Mammary epithelial cell (primary cell): ENCODE measurements at regions of chr1 and their contacts with region 1.

Region 1: DNA sequence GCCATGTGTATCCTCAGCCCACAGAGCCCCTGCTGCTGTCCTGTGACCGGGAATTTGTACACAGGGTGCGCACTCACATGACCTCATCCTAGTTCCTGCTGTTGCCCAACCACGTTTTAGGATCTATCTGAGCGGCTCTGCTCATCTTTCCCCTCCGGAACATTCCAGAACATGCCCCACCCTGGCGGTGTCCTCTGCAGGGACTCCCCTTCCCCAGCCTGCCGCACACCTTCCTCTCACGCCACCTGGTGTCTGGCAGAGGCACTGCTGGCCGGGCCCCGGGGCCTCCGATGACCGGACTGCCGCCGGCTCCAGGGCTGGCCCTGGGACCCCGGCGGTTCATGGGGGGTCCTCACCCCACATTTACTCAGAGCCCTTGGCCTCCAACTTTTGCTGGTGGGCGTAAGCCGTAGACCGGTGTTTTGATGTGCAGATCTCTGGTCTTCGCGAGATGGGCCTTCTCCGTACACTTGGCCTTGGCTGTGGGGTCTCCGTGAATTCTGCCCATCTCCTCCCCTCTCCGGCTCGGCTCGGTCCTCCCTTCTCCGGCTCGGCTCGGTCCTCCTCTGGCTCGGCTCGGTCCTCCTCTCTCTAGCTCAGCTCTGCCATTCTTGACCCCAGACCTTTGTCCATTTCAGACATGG is 29.5 kb downstream of the ARHGEF16 start:
- DNase-seq: no peak
- H3K4me3 ChIP-seq: no peak overlapping the region
- H3K27ac ChIP-seq: no peak overlapping the region
- H3K4me1 ChIP-seq: peaks cover 16% of the 10 kb centered on the region
- H3K27me3 ChIP-seq: no peaks in the 10 kb centered on the region
- CTCF ChIP-seq: peak; percentile 82 to 97

Region 2: DNA sequence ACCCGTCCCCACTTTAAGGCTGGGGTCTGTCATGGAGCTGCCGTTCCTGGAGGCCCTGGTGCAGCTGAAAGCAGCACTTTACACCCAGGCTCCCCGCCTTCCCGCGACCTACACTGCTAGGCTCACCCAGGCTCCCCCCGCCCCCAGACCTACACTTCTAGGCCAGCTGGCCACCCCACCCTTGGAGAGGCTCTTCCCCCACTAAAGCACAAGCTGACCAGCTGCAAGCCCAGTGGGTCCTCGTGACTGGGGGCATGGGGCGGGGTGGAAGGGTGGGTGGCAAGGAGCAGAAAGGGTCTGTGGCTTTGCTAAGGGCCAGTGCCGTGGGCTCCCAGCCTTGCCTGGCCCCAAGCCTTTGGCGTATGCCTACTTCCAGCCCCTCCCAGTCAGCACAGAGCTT is 39.2 kb before region 1 on chr1:
- CTCF ChIA-PET with region 1: no interaction called
- dilution Hi-C with region 1: no loop called
- in situ Hi-C with region 1: loop called (anchors 5 kb)
- intact Hi-C with region 1: no loop called
- DNase-seq: no peak
- H3K4me3 ChIP-seq: no peak overlapping the region
- H3K27ac ChIP-seq: no peak overlapping the region
- H3K4me1 ChIP-seq: no peaks in the 10 kb centered on the region
- H3K27me3 ChIP-seq: no peaks in the 10 kb centered on the region
- CTCF ChIP-seq: no peak

Region 3: GRCh38 chr1:3624200-3625136 is 140.5 kb after region 1 on chr1 and contains the start of gene TPRG1L:
- CTCF ChIA-PET with region 1: no interaction called
- dilution Hi-C with region 1: no loop called
- in situ Hi-C with region 1: loop called (anchors 5 to 10 kb)
- intact Hi-C with region 1: no loop called
- DNase-seq: peak; percentile 94
- H3K4me3 ChIP-seq: peak within 1 kb of the TSS; percentile 75 to 100 (median 77)
- H3K27ac ChIP-seq: no peak within 1 kb of the TSS
- H3K4me1 ChIP-seq: peaks cover 18% of the 10 kb centered on the region
- H3K27me3 ChIP-seq: no peaks in the 10 kb centered on the region
- CTCF ChIP-seq: no peak
- total RNA-seq, gene TPRG1L: 44.2 to 48.6 TPM